Activated CD4-positive, alpha-beta T cell treated with anti-CD3 and anti-CD28 coated beads, Interleukin-2, amount 10 ng/mL, durations not matched to agents 7 days and 5 days (primary cell): ENCODE measurements at regions of chr1 and their contacts with region 1.

Region 1: DNA sequence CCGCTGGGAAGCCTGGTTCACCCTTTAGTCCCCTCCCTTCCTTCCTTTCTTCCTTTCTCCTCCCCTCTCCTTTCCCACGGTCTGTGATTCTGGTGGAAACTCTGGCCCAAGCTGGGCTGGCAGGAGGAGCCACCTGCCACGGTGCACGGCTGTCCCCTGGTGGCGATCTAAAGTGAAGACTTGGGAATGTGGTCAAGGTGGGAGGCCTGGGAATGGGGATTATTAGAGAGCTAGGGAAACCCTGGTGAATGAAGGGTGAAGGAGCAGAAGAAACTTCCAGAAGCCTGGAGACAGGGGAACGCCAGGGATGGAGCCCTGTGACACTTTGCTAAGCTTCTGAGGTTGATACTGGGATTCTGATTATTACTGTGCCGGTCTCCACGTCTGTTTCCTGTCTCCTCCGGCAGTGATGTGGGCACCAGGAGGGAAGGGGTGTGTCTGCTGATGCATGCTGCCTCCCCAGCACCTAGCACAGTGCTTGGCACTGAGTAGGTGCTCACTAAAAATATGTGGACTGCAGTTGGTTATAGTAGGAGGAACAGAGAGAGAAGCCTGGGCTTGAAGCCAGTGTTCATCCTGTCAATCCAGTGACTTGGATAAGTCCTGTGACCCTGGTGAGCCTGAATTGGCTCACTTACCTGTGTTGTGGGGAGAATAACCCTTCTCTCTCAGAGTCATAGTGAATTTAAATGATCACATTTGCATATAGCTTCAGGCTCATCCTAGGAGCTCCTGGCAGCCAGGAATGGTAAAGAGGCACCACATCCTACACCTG is 71.2 kb upstream of the NBPF3 start:
- DNase-seq: peak; percentile 58
- H3K4me3 Mint-ChIP-seq: no peak overlapping the region
- H3K27ac Mint-ChIP-seq: no peak overlapping the region
- H3K4me1 Mint-ChIP-seq: peaks cover 8% of the 10 kb centered on the region
- H3K27me3 Mint-ChIP-seq: no peaks in the 10 kb centered on the region

Region 2: DNA sequence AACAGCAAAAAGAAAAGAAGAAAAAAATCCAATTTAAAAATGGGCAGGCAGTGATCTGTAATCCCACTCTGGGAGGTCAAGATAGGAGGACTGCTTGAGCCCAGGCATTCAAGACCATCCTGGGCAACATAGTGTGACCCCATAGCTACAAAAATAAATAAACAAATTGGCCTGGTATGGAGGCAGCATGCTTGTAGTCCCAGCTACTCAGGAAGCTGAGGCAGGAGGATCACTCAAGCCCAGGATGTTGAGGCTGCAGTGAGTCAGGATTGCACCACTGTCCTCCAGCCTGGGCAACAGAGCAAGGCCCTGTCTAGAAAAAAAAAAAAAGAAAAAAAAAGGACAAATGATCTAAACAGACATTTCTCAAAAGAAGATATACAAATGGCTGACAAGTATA is 291.6 kb before region 1 on chr1:
- CTCF ChIA-PET with region 1: no interaction called
- POLR2A ChIA-PET with region 1: no interaction called
- DNase-seq: no peak
- H3K4me3 Mint-ChIP-seq: no peak overlapping the region
- H3K27ac Mint-ChIP-seq: no peak overlapping the region
- H3K4me1 Mint-ChIP-seq: peaks cover 17% of the 10 kb centered on the region
- H3K27me3 Mint-ChIP-seq: no peaks in the 10 kb centered on the region

Region 3: DNA sequence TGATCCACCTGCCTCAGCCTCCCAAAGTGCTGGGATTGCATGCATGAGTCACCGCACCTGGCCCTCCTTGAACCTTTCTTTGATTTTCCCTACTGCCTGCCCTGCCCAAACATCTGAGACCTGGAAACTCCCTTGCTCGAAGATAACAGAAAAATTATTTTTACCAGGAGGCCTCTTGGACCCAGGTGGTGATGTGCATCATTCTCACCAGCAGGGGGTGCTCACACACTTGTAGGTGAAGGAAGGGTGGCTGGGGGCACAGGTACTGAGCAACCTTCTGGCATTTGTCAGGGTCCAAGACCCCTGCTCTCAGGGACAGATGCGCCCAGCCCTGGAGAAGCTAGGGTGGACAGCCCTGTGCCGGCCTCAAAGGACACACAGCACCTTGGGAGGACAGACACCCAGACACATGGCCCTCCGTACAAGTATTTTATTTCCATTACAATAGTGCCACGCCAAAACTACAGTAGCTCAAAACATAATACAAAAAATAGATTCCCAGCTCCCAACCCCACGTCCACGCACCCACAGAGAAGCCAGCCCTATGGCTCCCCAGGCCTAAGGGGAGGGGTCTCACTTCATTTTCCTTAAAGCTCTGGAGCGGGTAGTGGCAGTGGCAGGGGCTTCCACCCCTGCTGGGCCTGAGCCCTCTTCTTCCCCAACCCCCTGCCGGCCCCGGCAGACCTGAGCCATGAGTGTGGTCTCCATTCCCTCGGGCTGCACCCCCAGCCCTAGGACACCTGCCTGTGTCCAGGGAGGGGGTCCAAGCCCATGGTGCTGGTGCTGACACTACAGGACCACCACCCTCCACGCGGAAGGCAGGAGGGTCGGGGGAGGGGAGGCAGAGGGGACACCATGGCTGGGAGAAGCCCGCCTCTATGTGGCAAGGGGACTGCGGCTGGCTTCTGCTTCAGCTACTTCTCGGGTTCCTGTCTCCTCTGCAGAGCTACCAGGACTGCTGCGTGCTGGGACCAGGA is 151.6 kb before region 1 on chr1:
- CTCF ChIA-PET with region 1: interaction called, 18 read pairs
- POLR2A ChIA-PET with region 1: interaction called, 4 read pairs
- DNase-seq: peak; percentile 79
- H3K4me3 Mint-ChIP-seq: no peak overlapping the region
- H3K27ac Mint-ChIP-seq: peak overlapping the region; percentile 46
- H3K4me1 Mint-ChIP-seq: no peaks in the 10 kb centered on the region
- H3K27me3 Mint-ChIP-seq: no peaks in the 10 kb centered on the region

Region 4: GRCh38 chr1:21232044-21232443 is 136.7 kb before region 1 on chr1:
- CTCF ChIA-PET with region 1: interaction called, 24 read pairs
- POLR2A ChIA-PET with region 1: no interaction called
- DNase-seq: peak; percentile 44
- H3K4me3 Mint-ChIP-seq: no peak overlapping the region
- H3K27ac Mint-ChIP-seq: peak overlapping the region; percentile 66
- H3K4me1 Mint-ChIP-seq: no peaks in the 10 kb centered on the region
- H3K27me3 Mint-ChIP-seq: no peaks in the 10 kb centered on the region

Region 5: GRCh38 chr1:21244986-21245687 is 123.6 kb before region 1 on chr1:
- CTCF ChIA-PET with region 1: interaction called, 13 read pairs
- POLR2A ChIA-PET with region 1: no interaction called
- DNase-seq: no peak
- H3K4me3 Mint-ChIP-seq: no peak overlapping the region
- H3K27ac Mint-ChIP-seq: no peak overlapping the region
- H3K4me1 Mint-ChIP-seq: no peaks in the 10 kb centered on the region
- H3K27me3 Mint-ChIP-seq: no peaks in the 10 kb centered on the region

Region 6: DNA sequence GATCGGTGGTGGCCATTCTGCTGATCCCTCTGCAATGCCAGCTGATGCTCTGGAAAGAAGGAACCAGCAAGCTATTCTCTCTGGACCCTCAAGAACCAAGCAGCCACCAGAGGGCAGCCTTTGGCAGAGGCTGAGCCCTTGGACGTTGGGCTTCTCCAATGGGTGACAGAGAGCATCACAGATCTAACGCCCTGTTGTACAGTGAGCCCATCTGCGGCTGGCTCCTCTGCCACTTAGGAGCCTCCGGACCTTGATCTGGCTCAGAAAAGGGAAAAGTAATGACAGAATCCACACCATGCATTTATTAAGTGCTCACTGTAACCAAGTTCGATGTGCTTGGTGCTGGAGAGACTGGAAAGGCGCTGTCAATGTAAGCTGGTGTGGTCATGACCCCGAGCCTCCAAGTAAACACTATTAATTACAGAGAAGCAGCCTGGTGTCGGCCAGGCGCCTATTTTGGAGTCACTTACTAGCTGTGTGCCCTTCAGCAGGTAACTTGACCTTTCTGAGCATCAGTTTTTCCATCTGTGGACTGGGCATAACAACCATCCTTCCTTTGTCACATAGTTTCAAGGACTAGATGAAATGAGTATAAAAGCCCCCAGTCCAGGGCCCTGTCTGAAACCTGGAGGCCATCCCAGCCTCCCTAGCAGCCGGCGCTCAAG is 113.3 kb before region 1 on chr1:
- CTCF ChIA-PET with region 1: interaction called, 55 read pairs
- POLR2A ChIA-PET with region 1: no interaction called
- DNase-seq: peak; percentile 87
- H3K4me3 Mint-ChIP-seq: no peak overlapping the region
- H3K27ac Mint-ChIP-seq: no peak overlapping the region
- H3K4me1 Mint-ChIP-seq: peaks cover 32% of the 10 kb centered on the region
- H3K27me3 Mint-ChIP-seq: no peaks in the 10 kb centered on the region